ENCODE measurements at regions of chr1 and their contacts with region 1.

Region 1: GRCh38 chr1:17335821-17336710 is 28.1 kb downstream of the PADI4 start:
- DNase-seq: no peak
- H3K4me3 ChIP-seq: no peak overlapping the region
- CTCF ChIP-seq: peak; percentile 88

Region 2: GRCh38 chr1:17059739-17060460 is 276.2 kb before region 1 on chr1:
- CTCF ChIA-PET with region 1: interaction called, 79 read pairs
- POLR2A ChIA-PET with region 1: no interaction called
- DNase-seq: no peak
- H3K4me3 ChIP-seq: no peak overlapping the region
- CTCF ChIP-seq: peak; percentile 93

Region 3: DNA sequence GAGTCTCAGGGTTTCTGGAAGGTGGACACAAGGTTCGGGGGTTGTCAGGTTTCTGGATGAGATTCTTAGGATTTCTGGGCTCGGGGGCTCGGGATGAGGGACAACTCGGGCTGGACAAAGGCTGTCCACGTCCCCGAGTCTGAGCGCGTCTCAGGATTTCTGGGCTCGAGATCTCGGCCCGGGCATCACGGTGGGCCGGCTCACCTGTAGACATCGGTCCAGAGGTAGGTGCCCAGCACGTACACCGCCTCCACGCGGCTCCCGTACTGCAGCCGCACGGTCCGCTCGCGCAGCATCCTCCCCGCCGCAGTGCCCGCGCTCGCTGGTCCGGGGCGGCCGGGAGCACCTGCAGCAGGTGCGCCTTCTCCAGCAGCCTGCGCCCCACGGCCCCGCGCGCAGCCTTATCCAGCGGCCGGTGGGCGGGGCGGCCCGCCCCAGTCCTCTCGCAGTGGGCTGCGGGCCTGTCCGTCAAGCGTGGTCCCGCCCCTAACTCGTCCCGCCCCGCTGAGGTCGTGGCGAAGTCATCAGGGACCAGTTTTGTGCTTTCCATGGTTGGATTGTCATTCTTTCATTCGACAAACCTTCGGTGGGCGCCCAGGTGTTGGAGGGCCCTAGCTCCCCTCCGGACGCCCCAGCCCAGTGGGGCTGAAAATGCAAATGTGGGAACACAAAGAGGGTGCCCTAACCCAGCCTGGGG is 216.8 kb before region 1 on chr1 and contains the start of gene PADI2:
- CTCF ChIA-PET with region 1: interaction called, 136 read pairs
- POLR2A ChIA-PET with region 1: no interaction called
- DNase-seq: no peak
- H3K4me3 ChIP-seq: peak within 1 kb of the TSS; percentile 47
- CTCF ChIP-seq: no peak

Region 4: GRCh38 chr1:17181781-17182464 is 154.1 kb before region 1 on chr1:
- CTCF ChIA-PET with region 1: no interaction called
- POLR2A ChIA-PET with region 1: no interaction called
- DNase-seq: no peak
- H3K4me3 ChIP-seq: no peak overlapping the region
- CTCF ChIP-seq: no peak

Region 5: DNA sequence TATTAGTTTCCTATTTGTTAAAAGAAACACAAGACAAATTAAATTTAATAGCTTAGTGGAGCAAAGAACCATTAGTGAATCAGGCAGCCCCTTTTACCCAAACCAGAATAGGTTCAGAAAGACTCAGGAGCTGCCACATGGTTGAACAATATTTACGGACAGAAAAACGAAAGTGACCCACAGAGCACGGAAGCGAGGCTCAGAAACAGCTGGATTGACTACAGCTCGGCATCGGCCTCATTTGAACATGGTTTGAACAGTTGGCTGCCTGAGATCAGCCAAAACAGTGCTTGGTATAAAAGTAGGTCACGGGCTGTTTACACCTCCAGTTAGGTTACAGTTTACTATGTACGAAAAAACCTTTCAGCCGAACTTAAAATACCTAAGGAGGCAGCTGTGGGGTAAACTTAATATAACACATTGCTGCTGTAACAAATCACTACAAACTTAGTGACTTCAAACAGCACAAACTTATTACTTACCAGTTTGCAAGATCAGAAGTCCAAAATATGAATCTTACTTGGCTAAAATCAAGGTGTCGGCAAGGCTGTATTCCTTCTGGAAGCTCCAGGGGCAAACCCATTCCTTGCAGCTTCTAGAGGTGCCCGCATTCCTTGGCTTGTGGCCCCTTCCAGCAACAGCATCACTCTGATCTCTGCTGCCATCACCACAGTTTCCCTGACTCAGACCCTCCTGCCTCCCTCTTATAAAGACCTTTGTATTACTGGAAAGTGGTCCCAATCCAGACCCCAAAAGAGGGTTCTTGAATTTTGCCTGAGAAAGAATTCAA is 16.3 kb before region 1 on chr1:
- CTCF ChIA-PET with region 1: interaction called, 11 read pairs
- POLR2A ChIA-PET with region 1: no interaction called
- DNase-seq: no peak
- H3K4me3 ChIP-seq: no peak overlapping the region
- CTCF ChIP-seq: no peak

Region 6: GRCh38 chr1:17348125-17348979 is 12.3 kb after region 1 on chr1:
- CTCF ChIA-PET with region 1: interaction called, 16 read pairs
- POLR2A ChIA-PET with region 1: no interaction called
- DNase-seq: no peak
- H3K4me3 ChIP-seq: no peak overlapping the region
- CTCF ChIP-seq: no peak